ENCODE measurements at regions of chr15 and their contacts with region 1.

Region 1: GRCh38 chr15:73964736-73965093 is 27.4 kb downstream of the STOML1 start:
- DNase-seq: peak in 9 of 10 donors; percentile 46 to 92 (median 71)

Region 2: GRCh38 chr15:73950831-73951561 is 13.7 kb before region 1 on chr15:
- intact Hi-C with region 1: loop called (anchors 1 kb)
- DNase-seq: peak; percentile 63 to 96 (median 80)

Region 3: DNA sequence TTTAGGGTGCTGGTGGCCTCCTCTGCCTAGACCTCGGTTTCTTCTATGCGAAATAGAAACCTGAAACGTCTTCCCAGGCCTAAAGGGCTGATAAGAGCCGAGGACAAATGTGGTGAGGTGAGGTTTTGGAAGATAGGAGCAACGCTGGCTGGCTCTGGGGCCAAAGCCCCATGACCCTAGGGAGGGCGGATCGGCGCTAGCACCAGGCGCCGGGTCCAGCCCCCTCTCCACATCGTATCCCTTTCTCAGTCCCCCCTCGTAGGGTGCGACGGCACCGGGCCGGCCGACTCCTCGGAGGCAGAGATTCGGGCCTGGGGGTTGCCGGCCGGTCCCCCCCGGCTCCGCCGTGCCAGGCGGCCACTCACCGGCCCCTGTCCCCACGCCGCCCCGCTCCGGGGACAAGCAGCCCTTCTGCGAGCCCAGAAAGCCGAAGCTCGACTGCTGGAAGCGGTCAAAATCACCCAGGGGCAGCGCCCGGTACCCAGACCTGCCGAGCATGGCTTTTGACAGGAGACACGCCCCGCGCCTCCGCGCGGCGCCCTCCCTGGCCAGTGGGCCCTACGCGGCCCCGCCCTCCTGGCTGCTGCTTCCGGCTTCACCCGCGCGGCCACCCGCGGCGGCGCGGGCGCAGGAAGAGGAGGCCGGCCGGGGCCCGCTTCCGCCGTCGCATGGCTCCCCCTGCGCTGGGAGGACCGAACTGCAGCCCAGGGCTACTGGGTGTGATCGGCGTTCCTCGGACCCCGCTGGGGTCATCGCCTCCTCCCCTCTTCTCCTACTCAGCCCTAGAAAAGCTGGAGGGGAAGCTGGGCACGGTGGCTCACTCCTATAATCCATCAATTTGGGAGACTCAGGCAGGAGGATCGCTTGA is 27.2 kb after region 1 on chr15 and contains the start of gene STOML1:
- intact Hi-C with region 1: no loop called
- DNase-seq: peak; percentile 83 to 98 (median 90)

Region 4: DNA sequence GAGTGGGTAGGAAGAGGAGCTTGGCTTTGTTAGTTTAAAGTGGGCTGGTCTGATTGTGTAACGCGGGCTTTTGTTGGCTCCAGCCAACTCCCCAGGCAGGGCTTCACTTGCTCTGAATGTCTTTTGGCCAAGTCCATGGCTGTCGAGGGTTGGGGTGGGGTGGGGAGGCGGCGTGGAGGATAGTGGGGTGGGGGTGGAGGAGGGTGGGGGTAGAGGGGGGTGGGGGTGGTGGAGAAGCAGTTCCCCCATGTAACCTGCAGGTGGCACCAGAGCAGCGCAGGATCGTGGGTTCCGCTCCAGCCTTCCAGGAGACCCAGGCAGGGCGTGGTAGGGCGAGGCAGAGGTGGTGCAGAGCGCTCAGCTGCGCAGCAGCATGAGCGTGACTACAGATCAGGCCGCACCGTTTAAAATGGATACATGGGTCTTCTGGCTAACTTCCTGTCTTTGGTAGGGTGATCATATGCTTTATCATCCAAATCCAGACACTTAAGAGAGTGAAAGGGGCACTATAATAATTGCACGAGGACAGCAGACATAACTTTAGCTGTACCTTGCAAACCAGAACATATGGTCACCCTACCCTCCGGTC is 89.3 kb after region 1 on chr15:
- intact Hi-C with region 1: no loop called
- DNase-seq: peak; percentile 26 to 94 (median 66)